ENCODE measurements at regions of chr11 and their contacts with region 1.

Region 1: GRCh38 chr11:45102810-45103621 is 43.4 kb upstream of the PRDM11 start:
- DNase-seq: peak in 38 of 42 donors; percentile 34 to 84 (median 64)

Region 2: GRCh38 chr11:44936525-44936924 is 166.5 kb before region 1 on chr11:
- intact Hi-C with region 1: loop called (anchors 2 kb)
- DNase-seq: peak; percentile 70 to 96 (median 90)

Region 3: DNA sequence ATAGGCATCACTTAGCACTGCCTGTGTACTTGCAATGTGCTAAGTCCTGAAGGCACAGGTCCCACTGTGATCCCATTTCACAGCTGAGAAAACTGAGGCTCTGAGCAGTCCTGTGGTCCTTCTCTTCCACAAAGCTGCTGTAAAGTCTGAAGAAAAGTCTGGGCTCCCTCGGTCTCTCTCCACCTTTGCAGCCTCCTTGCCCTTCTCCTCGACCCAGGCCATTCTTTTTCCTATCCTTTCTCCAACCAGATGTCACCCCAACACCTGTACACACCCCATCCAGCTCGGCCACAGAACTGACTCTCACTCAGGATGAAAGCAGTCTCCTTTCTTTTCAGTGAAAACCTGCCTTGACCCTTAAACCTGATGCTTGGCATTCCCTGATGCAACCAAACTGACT is 225.7 kb after region 1 on chr11:
- intact Hi-C with region 1: loop called (anchors 5 kb)
- DNase-seq: no peak

Measured in head of caudate nucleus (tissue), 42 donors.